PC-9 (cell line): ENCODE measurements at regions of chr22 and their contacts with region 1.

Region 1: DNA sequence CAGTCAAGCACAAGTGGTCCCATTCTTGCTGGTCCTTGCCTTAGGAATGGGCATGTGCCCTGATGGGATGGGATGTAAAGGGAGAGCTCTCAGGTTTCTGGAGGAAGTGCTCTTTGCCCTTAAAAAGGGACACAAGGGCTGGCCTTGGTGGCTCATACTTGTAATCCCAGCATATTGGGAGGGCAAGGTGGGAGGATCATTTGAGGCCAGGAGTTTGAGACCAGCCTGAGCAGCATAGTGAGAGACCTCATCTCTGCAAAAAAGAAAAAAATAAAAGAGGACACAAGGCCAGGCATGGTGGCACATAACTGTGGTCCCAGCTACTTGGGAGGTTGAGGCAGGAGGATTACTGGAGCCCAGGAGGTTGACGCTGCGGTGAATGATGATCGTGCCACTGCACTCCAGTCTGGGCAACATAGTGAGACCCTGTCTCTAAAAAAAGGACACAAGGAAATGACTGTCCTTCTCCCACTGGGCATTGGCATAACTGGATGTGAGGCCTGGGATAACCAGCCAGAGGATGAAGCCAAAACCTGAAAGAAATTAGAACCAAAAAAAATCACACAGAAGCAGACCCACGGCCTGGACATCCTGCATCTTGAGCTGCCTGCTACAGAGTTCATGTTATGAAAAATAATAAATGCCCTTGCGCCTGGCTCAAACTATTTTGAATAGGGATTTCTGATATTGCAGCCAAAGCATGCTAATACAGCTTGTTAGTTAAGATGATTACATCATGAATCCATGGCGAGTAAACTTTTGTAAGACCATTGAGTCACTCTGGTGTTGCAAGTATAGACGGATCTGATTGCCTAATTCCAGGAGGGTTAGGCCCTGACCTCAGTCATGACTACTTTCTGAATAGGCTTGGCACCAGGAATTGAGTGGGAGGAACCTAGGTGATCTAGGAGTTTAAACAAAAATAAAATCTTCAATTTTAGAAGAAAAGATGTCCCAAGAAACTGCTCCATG is 12.9 kb upstream of the CRKL start:
- DNase-seq: peak; percentile 27 to 93
- H3K4me3 ChIP-seq: no peak overlapping the region
- H3K27ac ChIP-seq: peak overlapping the region; percentile 68
- H3K4me1 ChIP-seq: peaks cover 23% of the 10 kb centered on the region
- H3K27me3 ChIP-seq: no peaks in the 10 kb centered on the region
- CTCF ChIP-seq: no peak

Region 2: DNA sequence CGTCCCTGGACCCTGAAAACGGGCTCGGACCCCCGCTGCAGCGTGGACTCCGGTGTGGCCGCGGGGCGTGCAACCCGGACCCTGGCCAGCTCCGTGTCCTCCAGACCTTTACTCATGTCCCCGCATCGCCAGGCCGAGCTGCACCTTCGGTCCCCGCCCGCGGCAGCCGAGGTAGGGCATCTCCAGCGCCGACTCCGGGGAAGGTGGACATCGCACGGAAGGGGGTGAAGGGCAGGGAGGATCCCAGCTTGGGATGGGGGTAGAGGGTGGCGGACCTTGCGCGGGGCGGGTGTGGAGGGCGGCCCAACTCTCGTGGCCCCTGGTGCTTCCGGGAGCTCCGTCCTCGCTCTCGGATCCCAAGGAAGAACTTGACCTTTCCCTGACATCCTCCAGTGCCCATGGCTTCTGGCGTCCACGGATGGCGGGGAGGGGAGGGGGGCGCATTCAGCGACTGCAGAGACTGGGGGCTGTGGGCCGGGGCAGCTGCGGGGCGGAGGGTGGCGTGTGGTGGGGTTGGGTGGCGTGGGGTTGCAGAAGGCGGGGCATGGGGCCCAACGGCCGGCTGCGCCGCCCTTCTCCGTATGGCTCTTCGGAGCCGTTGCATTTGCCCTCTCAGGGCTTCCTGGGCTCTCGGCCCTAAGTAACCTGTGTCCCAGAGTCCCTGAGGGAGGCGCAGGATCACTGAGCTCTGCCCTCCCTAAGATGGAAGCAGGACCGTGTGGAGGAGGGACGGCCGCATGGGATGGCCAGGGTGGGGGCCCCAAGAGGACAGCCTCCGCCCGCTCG is 53.2 kb after region 1 on chr22:
- CTCF ChIA-PET with region 1: no interaction called
- POLR2A ChIA-PET with region 1: interaction called, 13 read pairs
- intact Hi-C with region 1: no loop called
- DNase-seq: peak; percentile 49 to 57
- H3K4me3 ChIP-seq: peak overlapping the region; percentile 84
- H3K27ac ChIP-seq: peak overlapping the region; percentile 57; the same call in 1 of the 2 replicates
- H3K4me1 ChIP-seq: peaks cover 9% of the 10 kb centered on the region; the same call in 1 of the 2 replicates
- H3K27me3 ChIP-seq: no peaks in the 10 kb centered on the region
- CTCF ChIP-seq: no peak

Region 3: DNA sequence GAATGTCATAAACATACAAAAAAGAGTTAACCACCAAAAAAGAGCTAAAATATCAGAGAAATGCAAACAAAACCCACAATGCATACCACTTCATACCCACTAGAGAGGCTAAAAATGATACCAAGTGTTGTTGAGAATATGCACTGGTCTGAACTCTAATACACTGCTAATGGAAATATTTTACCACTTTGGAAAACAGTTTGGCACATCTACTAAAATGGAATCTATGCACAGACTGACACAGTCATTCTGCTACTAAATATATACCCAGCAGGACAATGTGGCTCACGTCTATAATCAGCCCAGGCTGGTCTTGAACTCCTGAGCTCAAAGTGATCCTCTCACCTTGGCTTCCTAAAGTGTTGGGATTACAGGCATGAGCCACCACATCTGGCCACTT is 945.2 kb after region 1 on chr22:
- CTCF ChIA-PET with region 1: no interaction called
- POLR2A ChIA-PET with region 1: no interaction called
- intact Hi-C with region 1: no loop called
- DNase-seq: no peak
- H3K4me3 ChIP-seq: no peak overlapping the region
- H3K27ac ChIP-seq: no peak overlapping the region
- H3K4me1 ChIP-seq: no peaks in the 10 kb centered on the region
- H3K27me3 ChIP-seq: no peaks in the 10 kb centered on the region
- CTCF ChIP-seq: no peak